Activated T-helper 2 cell treated with anti-CD3 and anti-CD28 coated beads, Interferon-gamma antibody, Interleukin-2, Interleukin-4, amounts not matched to agents 10 μg/mL and 5 μg/mL and 100 μg/mL, durations not matched to agents 14 hours and 24 hours and 36 hours (primary cell): ENCODE measurements at regions of chr3 and their contacts with region 1.

Region 1: DNA sequence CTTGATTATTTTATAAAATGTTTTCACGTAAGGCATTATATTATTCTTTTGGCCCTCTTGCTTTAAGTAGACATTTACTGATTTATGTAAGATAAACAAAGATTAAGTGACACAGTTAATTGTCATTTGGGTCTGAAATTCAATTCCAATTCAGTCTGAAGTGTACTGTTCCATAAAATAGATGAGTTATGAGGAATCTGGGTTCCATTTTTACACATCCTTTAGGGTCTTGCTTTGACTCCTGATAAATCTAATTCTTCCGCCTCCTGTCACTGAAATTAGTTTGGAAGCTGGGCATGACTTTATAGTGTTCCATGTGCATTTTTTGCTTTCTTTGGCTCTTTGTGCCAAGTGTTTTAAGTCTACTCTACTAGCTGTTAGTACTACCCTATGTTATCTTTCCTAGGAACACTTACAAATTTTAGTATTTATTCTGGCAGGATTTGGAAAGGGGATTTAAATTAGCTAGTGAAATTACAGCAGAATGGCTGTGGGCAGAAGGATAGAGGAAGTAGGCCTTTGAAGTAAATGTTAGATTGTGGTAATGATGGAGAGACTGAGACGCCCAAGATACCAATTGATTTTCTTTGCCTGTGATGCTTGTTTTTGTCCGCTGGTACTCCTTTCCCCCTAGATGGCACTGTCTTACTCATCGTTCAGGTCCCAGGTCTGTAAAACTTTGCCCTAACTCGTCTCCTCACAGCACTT is 14.3 kb downstream of the ARL8B start:
- DNase-seq: no peak
- H3K4me3 Mint-ChIP-seq: no peak overlapping the region
- H3K27ac Mint-ChIP-seq: peak overlapping the region; percentile 43
- H3K4me1 Mint-ChIP-seq: peaks cover 35% of the 10 kb centered on the region
- H3K27me3 Mint-ChIP-seq: no peaks in the 10 kb centered on the region

Region 2: DNA sequence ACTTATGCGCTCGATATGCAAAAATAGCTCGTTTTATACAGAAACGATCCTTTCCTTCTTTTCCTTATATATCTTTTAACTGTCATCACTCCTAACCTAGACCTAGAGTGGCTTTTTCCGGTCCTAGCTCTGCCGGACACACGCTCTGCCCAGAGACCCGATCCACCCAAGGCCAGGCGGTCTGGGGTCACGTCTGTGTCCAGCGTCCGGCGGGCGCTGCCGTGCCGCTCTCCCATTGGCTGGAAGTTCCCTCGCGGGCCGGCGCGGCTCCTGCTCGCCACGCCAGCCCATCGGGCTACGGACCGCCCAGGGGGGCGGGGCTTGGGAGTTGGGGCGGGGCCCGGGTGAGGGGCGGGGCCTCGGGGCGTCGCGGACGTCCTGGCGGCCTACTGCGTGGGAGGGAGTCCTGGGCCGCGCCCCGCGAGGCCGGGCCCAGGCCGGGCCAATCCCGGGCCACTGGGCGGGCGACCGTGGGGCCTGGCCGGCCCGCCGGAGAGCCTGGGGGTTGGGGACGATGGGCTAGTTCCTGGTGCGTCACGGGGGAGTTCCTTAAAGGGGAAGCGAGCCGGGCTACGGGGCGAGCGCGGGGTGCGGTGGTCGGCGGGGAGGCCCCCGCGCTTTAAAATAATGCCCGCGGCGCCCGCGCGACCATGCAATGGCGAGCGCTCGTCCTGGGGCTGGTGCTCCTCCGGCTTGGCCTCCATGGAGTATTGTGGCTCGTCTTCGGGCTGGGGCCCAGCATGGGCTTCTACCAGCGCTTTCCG is 51.0 kb after region 1 on chr3 and contains the start of gene EDEM1:
- intact Hi-C with region 1: loop called (anchors 5 kb)
- DNase-seq: peak; percentile 95
- H3K4me3 Mint-ChIP-seq: peak within 1 kb of the TSS; percentile 99
- H3K27ac Mint-ChIP-seq: peak within 1 kb of the TSS; percentile 100
- H3K4me1 Mint-ChIP-seq: peaks cover 27% of the 10 kb centered on the region
- H3K27me3 Mint-ChIP-seq: no peaks in the 10 kb centered on the region
- total RNA-seq, gene EDEM1: 183 and 187 TPM in 2 replicates